ENCODE measurements at regions of chr11 and their contacts with region 1.

Region 1: GRCh38 chr11:130636722-130637517 is 188.5 kb downstream of the ADAMTS15 start:
- DNase-seq: no peak
- ATAC-seq: no peak
- H3K4me3 ChIP-seq: no peak overlapping the region
- H3K27ac ChIP-seq: no peak overlapping the region
- H3K4me1 ChIP-seq: peaks cover 0 to 12% (median 2%) of the 10 kb centered on the region in 12 donors
- H3K27me3 ChIP-seq: no peaks in the 10 kb centered on the region
- CTCF ChIP-seq: no peak
- POLR2A ChIP-seq: no peak

Region 2: DNA sequence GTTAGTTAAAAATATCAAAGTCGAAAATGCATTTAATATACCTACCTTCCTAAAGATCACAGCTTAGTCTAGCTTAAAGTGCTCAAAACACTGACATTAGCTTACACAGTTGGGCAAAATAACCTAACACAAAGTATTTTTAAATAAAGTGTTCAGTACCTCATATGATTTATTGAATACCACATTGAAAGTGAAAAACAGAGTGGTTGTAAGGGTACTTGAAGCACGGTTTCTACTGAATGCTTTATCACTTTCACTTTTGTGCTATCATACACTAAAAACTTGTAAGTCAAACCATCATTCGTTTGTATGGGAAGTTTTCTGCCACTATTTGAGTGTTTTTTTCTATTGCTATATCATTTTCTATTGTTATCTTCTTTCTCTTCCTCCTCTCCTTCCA is 358.8 kb before region 1 on chr11:
- intact Hi-C with region 1: no loop called
- DNase-seq: no peak
- ATAC-seq: no peak
- H3K4me3 ChIP-seq: no peak overlapping the region
- H3K27ac ChIP-seq: no peak overlapping the region
- H3K4me1 ChIP-seq: peaks cover 0 to 4% (median 0%) of the 10 kb centered on the region in 12 donors
- H3K27me3 ChIP-seq: no peaks in the 10 kb centered on the region
- CTCF ChIP-seq: no peak
- POLR2A ChIP-seq: no peak

Region 3: GRCh38 chr11:130580372-130580771 is 56.5 kb before region 1 on chr11:
- intact Hi-C with region 1: loop called in 2 of 10 experiments (anchors 10 kb)
- DNase-seq: peak in 3 of 5 donors; percentile 25 to 81 (median 59)
- ATAC-seq: peak; percentile 11 to 84 (median 71)
- H3K4me3 ChIP-seq: no peak overlapping the region
- H3K27ac ChIP-seq: peak overlapping the region in 10 of 12 donors; percentile 7 to 73 (median 54)
- H3K4me1 ChIP-seq: peaks cover 0 to 35% (median 15%) of the 10 kb centered on the region in 12 donors
- H3K27me3 ChIP-seq: no peaks in the 10 kb centered on the region
- CTCF ChIP-seq: no peak
- POLR2A ChIP-seq: no peak